Posterior cingulate gyrus (tissue), 11 donors: ENCODE measurements at regions of chr22 and their contacts with region 1.

Region 1: DNA sequence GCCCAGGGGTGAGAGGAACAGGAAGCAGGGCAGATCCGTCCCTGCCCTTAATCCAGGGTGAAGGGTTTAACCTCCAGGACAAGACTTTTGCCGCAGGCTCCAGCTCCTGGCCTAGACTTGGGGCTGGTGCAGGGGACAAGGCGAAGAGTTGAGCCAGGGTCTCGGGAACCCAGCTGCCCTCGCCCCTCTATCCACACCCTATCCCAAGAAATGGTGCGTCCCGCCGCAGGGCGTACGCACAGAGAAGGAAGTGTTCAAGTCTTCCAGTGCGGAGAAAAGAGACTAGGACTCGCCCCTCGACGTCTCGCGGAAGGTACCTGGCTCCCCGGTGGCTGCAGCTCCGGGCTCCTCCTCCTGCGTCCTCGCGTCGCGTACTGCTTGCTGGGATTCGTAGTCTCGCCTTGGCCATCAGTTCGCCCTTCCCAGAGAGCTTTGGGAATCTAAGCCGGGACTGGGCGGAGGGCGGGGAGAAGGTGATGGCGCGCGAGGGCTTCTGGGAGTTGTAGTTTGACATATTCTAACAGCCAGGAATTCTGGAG is at the start of gene ZMAT5:
- DNase-seq: peak; percentile 91 to 99 (median 95)

Region 2: DNA sequence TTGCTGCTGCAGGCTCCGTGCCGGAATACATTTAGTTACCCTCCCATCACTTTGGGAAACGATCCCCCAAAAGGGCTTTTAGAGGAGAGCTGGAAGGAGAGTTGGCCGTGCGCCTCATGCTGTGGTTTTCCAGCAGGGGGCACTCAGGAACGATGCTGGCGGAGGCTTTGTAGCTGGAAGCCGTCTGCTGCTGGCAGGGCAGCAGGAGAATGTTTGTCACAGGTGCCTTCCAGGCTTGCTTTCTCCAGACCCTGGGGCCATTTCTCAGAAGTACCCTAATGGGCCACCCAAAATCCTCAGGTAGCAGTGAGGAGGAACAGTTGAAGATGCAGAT is 76.9 kb before region 1 on chr22:
- intact Hi-C with region 1: loop called (anchors 5 kb)
- DNase-seq: peak; percentile 74 to 97 (median 84)